B cell (primary cell): ENCODE measurements at regions of chr3 and their contacts with region 1.

Region 1: GRCh38 chr3:104510131-104510849 is 856.4 kb upstream of the ALCAM start:
- DNase-seq: no peak
- ATAC-seq: no peak
- H3K4me3 ChIP-seq: no peak overlapping the region
- H3K4me3 Mint-ChIP-seq: peak overlapping the region; percentile 5
- H3K27ac ChIP-seq: no peak overlapping the region
- H3K27ac Mint-ChIP-seq: peak overlapping the region; percentile 12
- H3K4me1 ChIP-seq: peaks cover 3 to 4% of the 10 kb centered on the region in 2 donors
- H3K4me1 Mint-ChIP-seq: peaks cover 28% of the 10 kb centered on the region
- H3K27me3 ChIP-seq: no peaks in the 10 kb centered on the region
- H3K27me3 Mint-ChIP-seq: no peaks in the 10 kb centered on the region
- CTCF ChIP-seq: no peak

Region 2: DNA sequence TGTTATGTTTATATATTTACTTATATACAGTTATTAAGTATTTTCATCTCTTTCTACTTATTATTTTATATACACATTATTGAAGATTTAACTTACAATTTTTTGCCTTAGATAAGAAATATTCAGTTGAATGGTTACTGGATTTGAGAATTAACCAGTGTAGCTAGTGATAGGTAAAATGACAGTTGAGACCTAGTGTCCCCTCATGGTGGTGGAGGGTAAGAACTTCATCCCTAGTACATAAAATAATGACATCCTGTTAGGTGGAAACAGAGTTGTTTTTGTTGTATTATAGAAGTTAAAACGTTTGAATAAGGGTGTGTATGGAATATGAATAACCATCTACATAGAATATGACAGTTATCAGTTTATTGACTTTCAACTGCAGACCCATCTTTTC is 296.0 kb before region 1 on chr3:
- CTCF ChIA-PET with region 1: no interaction called
- POLR2A ChIA-PET with region 1: no interaction called
- intact Hi-C with region 1: no loop called
- DNase-seq: no peak
- ATAC-seq: no peak
- H3K4me3 ChIP-seq: no peak overlapping the region
- H3K4me3 Mint-ChIP-seq: no peak overlapping the region
- H3K27ac ChIP-seq: no peak overlapping the region
- H3K27ac Mint-ChIP-seq: no peak overlapping the region
- H3K4me1 ChIP-seq: no peaks in the 10 kb centered on the region
- H3K4me1 Mint-ChIP-seq: peaks cover 4% of the 10 kb centered on the region
- H3K27me3 ChIP-seq: no peaks in the 10 kb centered on the region
- H3K27me3 Mint-ChIP-seq: no peaks in the 10 kb centered on the region
- CTCF ChIP-seq: no peak

Region 3: GRCh38 chr3:104460477-104461406 is 49.5 kb before region 1 on chr3:
- CTCF ChIA-PET with region 1: no interaction called
- POLR2A ChIA-PET with region 1: no interaction called
- intact Hi-C with region 1: loop called (anchors 5 kb)
- DNase-seq: peak; percentile 10
- ATAC-seq: no peak
- H3K4me3 ChIP-seq: no peak overlapping the region
- H3K4me3 Mint-ChIP-seq: no peak overlapping the region
- H3K27ac ChIP-seq: no peak overlapping the region
- H3K27ac Mint-ChIP-seq: peak overlapping the region; percentile 10
- H3K4me1 ChIP-seq: no peaks in the 10 kb centered on the region
- H3K4me1 Mint-ChIP-seq: peaks cover 9% of the 10 kb centered on the region
- H3K27me3 ChIP-seq: no peaks in the 10 kb centered on the region
- H3K27me3 Mint-ChIP-seq: no peaks in the 10 kb centered on the region
- CTCF ChIP-seq: no peak

Region 4: GRCh38 chr3:104547031-104547430 is 36.7 kb after region 1 on chr3:
- CTCF ChIA-PET with region 1: no interaction called
- POLR2A ChIA-PET with region 1: no interaction called
- intact Hi-C with region 1: loop called (anchors 5 kb)
- DNase-seq: no peak
- ATAC-seq: no peak
- H3K4me3 ChIP-seq: no peak overlapping the region
- H3K4me3 Mint-ChIP-seq: no peak overlapping the region
- H3K27ac ChIP-seq: no peak overlapping the region
- H3K27ac Mint-ChIP-seq: no peak overlapping the region
- H3K4me1 ChIP-seq: no peaks in the 10 kb centered on the region
- H3K4me1 Mint-ChIP-seq: peaks cover 15% of the 10 kb centered on the region
- H3K27me3 ChIP-seq: no peaks in the 10 kb centered on the region
- H3K27me3 Mint-ChIP-seq: no peaks in the 10 kb centered on the region
- CTCF ChIP-seq: no peak

Region 5: DNA sequence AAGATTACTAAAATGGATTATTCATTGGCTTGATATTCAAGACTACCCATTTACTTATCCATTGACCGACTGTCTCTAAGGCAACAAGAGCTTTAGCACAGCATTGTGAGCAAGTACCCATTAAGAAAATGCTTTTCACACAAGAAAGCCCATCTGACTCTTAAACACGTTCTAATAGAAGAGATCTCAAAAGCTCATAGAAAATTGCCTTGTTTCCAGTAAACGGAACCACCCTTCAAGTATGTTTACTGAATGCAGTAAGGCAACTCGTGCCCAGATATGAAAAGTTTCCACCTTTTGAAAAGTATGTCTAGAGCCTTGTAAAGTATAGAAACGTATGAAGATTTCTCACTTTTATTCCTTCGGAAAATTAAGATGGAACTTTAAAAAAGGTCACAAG is 201.1 kb after region 1 on chr3:
- CTCF ChIA-PET with region 1: no interaction called
- POLR2A ChIA-PET with region 1: no interaction called
- intact Hi-C with region 1: no loop called
- DNase-seq: no peak
- ATAC-seq: no peak
- H3K4me3 ChIP-seq: no peak overlapping the region
- H3K4me3 Mint-ChIP-seq: no peak overlapping the region
- H3K27ac ChIP-seq: no peak overlapping the region
- H3K27ac Mint-ChIP-seq: no peak overlapping the region
- H3K4me1 ChIP-seq: no peaks in the 10 kb centered on the region
- H3K4me1 Mint-ChIP-seq: peaks cover 8% of the 10 kb centered on the region
- H3K27me3 ChIP-seq: no peaks in the 10 kb centered on the region
- H3K27me3 Mint-ChIP-seq: no peaks in the 10 kb centered on the region
- CTCF ChIP-seq: no peak